Activated CD8-positive, alpha-beta T cell treated with anti-CD3 and anti-CD28 coated beads for 36 hours (primary cell): ENCODE measurements at regions of chr13 and their contacts with region 1.

Region 1: DNA sequence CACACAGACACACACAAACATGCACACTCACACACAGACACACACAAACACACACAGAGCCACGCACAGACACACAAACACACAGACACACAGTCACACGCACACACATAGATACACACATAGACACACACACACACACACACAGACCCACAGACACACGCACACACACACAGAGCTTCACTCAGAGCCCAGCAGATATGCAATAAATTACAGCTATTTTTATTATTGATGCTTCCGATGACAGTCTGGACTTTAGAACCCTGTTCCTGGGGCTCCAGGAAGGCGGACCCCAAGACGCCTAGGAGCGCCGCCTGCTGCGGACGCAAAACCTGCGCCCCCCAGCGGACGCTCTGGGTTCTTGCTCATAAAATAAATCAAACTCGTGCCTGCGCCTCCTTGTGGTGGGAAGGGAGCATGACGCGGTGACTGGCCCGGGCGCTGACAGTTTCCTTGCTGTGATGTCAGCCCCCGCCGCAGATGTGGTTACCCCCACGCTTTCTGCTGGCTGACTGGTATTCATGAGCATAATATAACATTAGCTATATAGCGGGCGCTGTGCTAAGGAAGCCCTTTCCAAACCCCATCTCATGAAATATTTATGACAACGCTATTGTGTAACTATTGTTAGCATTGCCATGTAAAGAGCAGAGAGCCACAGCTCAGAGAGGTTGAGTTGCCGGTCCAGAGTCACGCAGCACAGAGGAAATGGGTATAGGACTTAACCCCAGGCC is 64.4 kb upstream of the TM9SF2 start:
- DNase-seq: peak; percentile 99
- ATAC-seq: peak; percentile 47
- H3K4me3 Mint-ChIP-seq: peak overlapping the region; percentile 19
- H3K27ac Mint-ChIP-seq: peak overlapping the region; percentile 80
- H3K4me1 Mint-ChIP-seq: peaks cover 56% of the 10 kb centered on the region
- H3K27me3 Mint-ChIP-seq: peaks cover 2% of the 10 kb centered on the region
- CTCF ChIP-seq: peak; percentile 100

Region 2: GRCh38 chr13:99281811-99282263 is 155.0 kb before region 1 on chr13:
- CTCF ChIA-PET with region 1: interaction called, 256 read pairs
- POLR2A ChIA-PET with region 1: no interaction called
- intact Hi-C with region 1: no loop called
- DNase-seq: peak; percentile 73
- ATAC-seq: peak; percentile 75
- H3K4me3 Mint-ChIP-seq: no peak overlapping the region
- H3K27ac Mint-ChIP-seq: peak overlapping the region; percentile 28
- H3K4me1 Mint-ChIP-seq: peaks cover 87% of the 10 kb centered on the region
- H3K27me3 Mint-ChIP-seq: no peaks in the 10 kb centered on the region
- CTCF ChIP-seq: no peak

Region 3: DNA sequence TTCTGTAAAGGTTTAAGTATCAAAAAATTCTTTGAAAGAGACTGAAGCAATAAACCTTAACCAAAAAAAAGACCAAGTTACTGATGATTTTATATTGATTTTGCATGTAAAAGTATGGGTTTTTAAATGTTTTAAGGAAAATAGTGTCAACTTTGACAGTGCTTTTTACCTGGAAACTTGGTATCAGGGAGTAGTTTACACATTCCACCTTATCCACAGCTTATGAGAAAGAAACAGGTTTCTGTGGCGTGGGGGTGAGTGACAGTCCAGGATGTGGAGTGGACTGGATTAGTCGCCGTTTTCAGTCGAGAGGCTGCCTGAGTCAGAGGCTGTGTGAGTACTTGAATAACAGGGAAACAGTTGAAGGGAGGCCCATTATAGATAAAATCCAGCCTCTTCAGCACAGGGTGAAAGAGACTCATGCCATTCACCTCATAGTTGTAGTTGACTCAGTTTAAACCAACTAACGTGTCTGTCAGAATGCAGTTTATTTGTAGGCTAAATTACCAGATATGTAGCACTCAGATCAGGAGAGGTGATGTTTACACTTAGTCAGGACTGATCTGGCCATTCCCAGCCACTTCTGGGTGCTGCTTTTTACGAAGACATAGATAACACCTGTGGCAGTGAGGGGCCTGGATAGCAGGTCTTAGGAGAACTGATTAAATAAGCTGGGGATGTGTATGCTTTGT is 129.1 kb before region 1 on chr13:
- CTCF ChIA-PET with region 1: interaction called, 25 read pairs
- POLR2A ChIA-PET with region 1: interaction called, 5 read pairs
- intact Hi-C with region 1: loop called (anchors 10 kb)
- DNase-seq: peak; percentile 86
- ATAC-seq: peak; percentile 86
- H3K4me3 Mint-ChIP-seq: peak overlapping the region; percentile 76
- H3K27ac Mint-ChIP-seq: peak overlapping the region; percentile 93
- H3K4me1 Mint-ChIP-seq: peaks cover 85% of the 10 kb centered on the region
- H3K27me3 Mint-ChIP-seq: no peaks in the 10 kb centered on the region
- CTCF ChIP-seq: no peak

Region 4: GRCh38 chr13:99366075-99366987 is 70.5 kb before region 1 on chr13:
- CTCF ChIA-PET with region 1: interaction called, 16 read pairs
- POLR2A ChIA-PET with region 1: interaction called, 3 read pairs
- intact Hi-C with region 1: no loop called
- DNase-seq: peak; percentile 48
- ATAC-seq: peak; percentile 22
- H3K4me3 Mint-ChIP-seq: peak overlapping the region; percentile 38
- H3K27ac Mint-ChIP-seq: peak overlapping the region; percentile 61
- H3K4me1 Mint-ChIP-seq: peaks cover 87% of the 10 kb centered on the region
- H3K27me3 Mint-ChIP-seq: no peaks in the 10 kb centered on the region
- CTCF ChIP-seq: no peak

Region 5: DNA sequence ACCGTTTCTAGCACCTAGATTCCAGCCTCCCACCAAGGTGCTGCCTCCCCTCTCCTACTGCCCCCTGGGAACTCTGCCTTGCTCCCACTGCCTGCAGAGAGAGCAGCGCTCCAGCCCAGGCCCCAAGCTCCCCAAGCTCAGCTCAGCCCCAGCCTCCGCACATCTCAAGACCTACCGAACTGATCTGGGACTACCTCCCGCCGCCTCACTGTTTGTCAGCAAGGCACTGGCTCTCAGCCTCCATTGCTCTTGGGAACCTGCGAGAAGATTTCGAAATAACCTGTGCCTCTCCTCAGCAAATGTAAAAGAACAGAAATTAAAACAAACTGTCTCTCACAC is 37.2 kb before region 1 on chr13:
- CTCF ChIA-PET with region 1: interaction called, 17 read pairs
- POLR2A ChIA-PET with region 1: interaction called, 5 read pairs
- intact Hi-C with region 1: no loop called
- DNase-seq: no peak
- ATAC-seq: no peak
- H3K4me3 Mint-ChIP-seq: peak overlapping the region; percentile 62
- H3K27ac Mint-ChIP-seq: peak overlapping the region; percentile 91
- H3K4me1 Mint-ChIP-seq: peaks cover 63% of the 10 kb centered on the region
- H3K27me3 Mint-ChIP-seq: no peaks in the 10 kb centered on the region
- CTCF ChIP-seq: no peak

Region 6: DNA sequence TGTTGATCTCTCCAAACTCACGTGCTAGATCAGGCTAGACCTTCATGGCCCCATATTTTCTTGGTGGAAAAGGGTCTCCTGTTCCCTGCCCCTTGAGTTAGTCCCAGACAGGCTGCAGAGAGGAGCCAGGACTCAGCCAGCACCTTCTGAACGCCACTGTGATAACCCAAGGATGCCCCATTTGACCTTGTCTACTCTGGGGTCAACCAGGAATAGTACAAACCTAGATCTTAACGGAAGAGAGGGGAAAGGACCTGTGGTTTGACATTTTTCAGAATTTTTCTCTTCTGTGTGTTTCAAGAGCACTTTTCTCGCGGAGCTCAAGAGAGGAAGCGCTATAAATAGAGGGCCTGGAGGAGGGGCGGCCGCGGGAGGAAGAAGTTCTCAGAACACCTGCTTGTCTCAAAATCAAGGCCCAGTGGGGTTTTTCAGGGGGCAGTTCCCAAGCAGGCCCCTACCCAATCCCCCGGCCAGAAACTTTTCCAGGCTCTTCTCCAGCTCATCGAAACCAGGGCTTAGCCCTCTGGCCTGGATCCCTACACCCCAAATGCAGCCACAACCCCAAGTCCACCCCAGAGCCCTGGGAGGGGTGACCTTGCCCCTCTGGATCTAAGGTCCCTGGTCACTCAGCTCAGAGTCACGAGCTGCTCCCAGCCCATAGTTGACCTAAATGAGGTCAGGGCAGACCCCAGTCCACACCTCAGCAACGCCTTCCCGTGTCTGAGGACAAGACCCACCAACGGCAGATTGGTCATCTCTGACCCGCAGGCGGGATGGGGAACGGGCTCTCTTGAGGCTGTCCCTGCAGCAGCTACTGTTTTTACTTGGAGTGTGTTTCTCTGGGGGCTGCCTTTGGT is 11.1 kb before region 1 on chr13:
- CTCF ChIA-PET with region 1: interaction called, 162 read pairs
- POLR2A ChIA-PET with region 1: interaction called, 23 read pairs
- intact Hi-C with region 1: no loop called
- DNase-seq: peak; percentile 88
- ATAC-seq: peak; percentile 69
- H3K4me3 Mint-ChIP-seq: peak overlapping the region; percentile 73
- H3K27ac Mint-ChIP-seq: peak overlapping the region; percentile 94
- H3K4me1 Mint-ChIP-seq: peaks cover 72% of the 10 kb centered on the region
- H3K27me3 Mint-ChIP-seq: no peaks in the 10 kb centered on the region
- CTCF ChIP-seq: no peak